ENCODE measurements at regions of chr1 and their contacts with region 1.

Region 1: DNA sequence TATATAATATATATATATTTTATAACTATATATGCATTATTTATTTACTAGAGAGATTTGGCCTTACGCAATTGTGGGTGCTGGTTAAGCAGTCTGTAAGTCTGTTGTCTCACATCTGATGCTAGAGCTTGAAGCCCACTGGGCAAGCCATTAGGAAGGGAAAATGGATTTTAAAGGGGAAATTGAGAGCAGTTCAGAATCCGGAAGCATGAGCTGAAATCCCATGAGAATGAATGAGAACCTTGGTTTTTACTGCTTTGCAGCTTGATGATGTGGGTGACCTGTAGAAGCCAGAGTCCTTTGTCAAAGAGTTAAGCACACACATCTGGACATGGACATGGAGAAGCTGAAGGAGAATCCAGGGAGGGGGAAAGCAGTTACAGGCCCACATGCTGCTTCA is 220.8 kb upstream of the DAB1 start:
- DNase-seq: no peak
- ATAC-seq: no peak
- H3K4me3 ChIP-seq: no peak overlapping the region
- H3K27ac ChIP-seq: no peak overlapping the region
- H3K4me1 ChIP-seq: no peaks in the 10 kb centered on the region
- H3K27me3 ChIP-seq: peaks cover 0 to 4% (median 0%) of the 10 kb centered on the region in 7 donors
- CTCF ChIP-seq: no peak

Region 2: GRCh38 chr1:57300186-57300585 is 344.5 kb before region 1 on chr1:
- intact Hi-C with region 1: no loop called
- DNase-seq: no peak
- ATAC-seq: no peak
- H3K4me3 ChIP-seq: no peak overlapping the region
- H3K27ac ChIP-seq: no peak overlapping the region
- H3K4me1 ChIP-seq: peaks cover 0 to 23% (median 0%) of the 10 kb centered on the region in 9 donors
- H3K27me3 ChIP-seq: no peaks in the 10 kb centered on the region
- CTCF ChIP-seq: no peak

Region 3: GRCh38 chr1:57696043-57696442 is 51.4 kb after region 1 on chr1:
- intact Hi-C with region 1: no loop called
- DNase-seq: no peak
- ATAC-seq: no peak
- H3K4me3 ChIP-seq: no peak overlapping the region
- H3K27ac ChIP-seq: no peak overlapping the region
- H3K4me1 ChIP-seq: no peaks in the 10 kb centered on the region
- H3K27me3 ChIP-seq: no peaks in the 10 kb centered on the region
- CTCF ChIP-seq: no peak

Region 4: DNA sequence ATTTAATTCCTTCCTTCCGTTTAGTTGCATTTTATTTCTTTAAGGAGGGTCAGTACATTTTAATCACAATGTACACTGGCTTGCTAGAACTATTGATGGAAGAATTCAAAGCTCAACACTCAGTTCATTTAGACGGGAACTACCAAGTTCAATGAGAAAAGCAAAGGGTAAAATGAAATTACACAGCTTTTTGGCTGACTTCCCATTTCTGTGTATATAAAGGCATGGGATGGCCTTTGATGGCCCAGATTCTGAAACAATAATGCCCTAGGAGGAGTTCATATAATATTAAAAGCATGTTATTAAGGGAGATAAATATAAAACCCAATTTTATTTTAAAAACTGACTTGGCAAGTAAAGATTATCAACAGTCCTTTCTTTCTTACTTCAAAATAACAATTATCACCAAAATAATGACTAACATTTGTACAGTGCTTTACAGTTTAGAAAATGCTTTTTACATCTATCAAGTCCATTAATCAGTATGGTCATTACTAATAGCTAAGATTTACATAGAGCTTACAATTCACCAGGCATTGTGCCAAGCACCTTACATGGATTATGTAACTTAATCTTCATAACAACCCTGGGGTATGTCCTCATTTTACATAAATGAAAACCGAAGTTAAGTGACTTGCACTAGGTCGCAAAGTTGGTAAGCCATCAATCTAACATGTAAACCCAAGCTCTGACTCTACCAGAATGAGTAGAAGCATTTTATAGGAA is 499.5 kb after region 1 on chr1:
- intact Hi-C with region 1: loop called in 1 of 10 experiments (anchors 5 kb)
- DNase-seq: no peak
- ATAC-seq: no peak
- H3K4me3 ChIP-seq: no peak overlapping the region
- H3K27ac ChIP-seq: no peak overlapping the region
- H3K4me1 ChIP-seq: no peaks in the 10 kb centered on the region
- H3K27me3 ChIP-seq: no peaks in the 10 kb centered on the region
- CTCF ChIP-seq: no peak

Region 5: DNA sequence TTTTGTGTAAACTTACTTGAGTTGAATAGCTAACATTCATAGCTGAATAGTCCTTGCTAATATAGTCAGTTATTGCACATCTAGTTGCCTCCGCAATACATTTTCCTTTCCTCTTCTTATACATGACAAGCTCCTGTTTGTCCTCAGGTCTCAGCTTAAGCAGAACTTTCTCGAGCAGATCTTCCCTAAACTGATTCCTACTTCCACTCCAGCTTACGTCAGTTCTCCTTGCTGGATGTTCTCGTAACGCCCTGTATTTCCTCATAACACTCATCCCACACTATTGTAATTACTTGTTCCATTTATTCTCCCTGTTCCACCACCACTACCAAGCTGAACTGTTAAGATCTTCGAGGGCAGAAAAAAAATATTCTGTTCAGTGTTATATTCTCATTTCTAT is 917.0 kb after region 1 on chr1:
- intact Hi-C with region 1: loop called in 1 of 10 experiments (anchors 10 kb)
- DNase-seq: no peak
- ATAC-seq: no peak
- H3K4me3 ChIP-seq: no peak overlapping the region
- H3K27ac ChIP-seq: no peak overlapping the region
- H3K4me1 ChIP-seq: no peaks in the 10 kb centered on the region
- H3K27me3 ChIP-seq: peaks cover 0 to 16% (median 0%) of the 10 kb centered on the region in 7 donors
- CTCF ChIP-seq: no peak